Esophagus squamous epithelium (tissue), 5 donors: ENCODE measurements at regions of chr18 and their contacts with region 1.

Region 1: GRCh38 chr18:59402432-59403090 is 43.5 kb upstream of the LMAN1 start:
- DNase-seq: no peak
- H3K4me3 ChIP-seq: no peak overlapping the region
- H3K27ac ChIP-seq: no peak overlapping the region
- H3K4me1 ChIP-seq: no peaks in the 10 kb centered on the region
- H3K27me3 ChIP-seq: no peaks in the 10 kb centered on the region
- CTCF ChIP-seq: peak; percentile 66 to 94 (median 87)
- POLR2A ChIP-seq: no peak

Region 2: GRCh38 chr18:59249205-59249774 is 153.3 kb before region 1 on chr18:
- intact Hi-C with region 1: loop called (anchors 5 kb)
- DNase-seq: no peak
- H3K4me3 ChIP-seq: no peak overlapping the region
- H3K27ac ChIP-seq: no peak overlapping the region
- H3K4me1 ChIP-seq: no peaks in the 10 kb centered on the region
- H3K27me3 ChIP-seq: peaks cover 0 to 68% (median 0%) of the 10 kb centered on the region in 4 donors
- CTCF ChIP-seq: peak; percentile 46 to 79 (median 59)
- POLR2A ChIP-seq: no peak

Region 3: DNA sequence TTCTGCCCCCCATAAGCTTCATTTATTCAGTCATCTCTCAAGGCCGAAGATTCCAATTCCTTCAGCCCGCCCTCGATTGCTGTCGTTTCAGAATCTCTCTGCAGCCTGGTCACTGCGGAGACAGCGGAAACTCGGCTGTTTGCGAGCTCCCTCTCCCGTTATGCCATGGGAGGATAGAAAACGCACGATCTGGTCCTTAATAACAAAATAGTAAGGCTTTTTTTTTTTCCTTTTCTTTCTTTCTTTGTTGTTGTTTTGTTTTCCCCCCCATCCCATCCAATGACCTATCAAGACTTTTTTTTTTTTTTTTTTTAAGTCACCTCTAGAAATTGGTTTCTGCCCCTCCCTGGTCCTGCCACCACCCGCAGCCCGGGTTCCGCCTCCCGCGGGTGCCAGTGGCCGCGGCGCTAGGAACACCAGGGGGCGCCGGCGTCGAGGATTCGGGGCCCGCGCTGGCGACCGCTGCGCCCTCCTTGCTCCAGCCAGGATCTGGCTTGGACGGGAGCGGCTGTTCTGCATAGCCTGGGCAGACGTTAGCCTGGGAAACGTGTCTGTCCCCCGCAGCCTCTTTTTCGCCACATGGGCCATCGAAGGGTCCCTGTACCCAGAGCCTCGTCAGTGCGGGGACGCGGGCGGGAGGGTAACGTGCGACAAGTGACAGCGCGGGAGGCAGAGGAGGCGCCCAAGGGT is 94.2 kb before region 1 on chr18:
- intact Hi-C with region 1: loop called (anchors 2 kb)
- DNase-seq: no peak
- H3K4me3 ChIP-seq: peak overlapping the region in 3 of 4 donors; percentile 22 to 53 (median 29)
- H3K27ac ChIP-seq: no peak overlapping the region
- H3K4me1 ChIP-seq: peaks cover 0 to 13% (median 5%) of the 10 kb centered on the region in 3 donors
- H3K27me3 ChIP-seq: peaks cover 0 to 74% (median 2%) of the 10 kb centered on the region in 4 donors
- CTCF ChIP-seq: peak; percentile 44 to 79 (median 75)
- POLR2A ChIP-seq: no peak